Right ventricle myocardium inferior (tissue), 1 donor: ENCODE measurements at regions of chr4 and their contacts with region 1.

Region 1: DNA sequence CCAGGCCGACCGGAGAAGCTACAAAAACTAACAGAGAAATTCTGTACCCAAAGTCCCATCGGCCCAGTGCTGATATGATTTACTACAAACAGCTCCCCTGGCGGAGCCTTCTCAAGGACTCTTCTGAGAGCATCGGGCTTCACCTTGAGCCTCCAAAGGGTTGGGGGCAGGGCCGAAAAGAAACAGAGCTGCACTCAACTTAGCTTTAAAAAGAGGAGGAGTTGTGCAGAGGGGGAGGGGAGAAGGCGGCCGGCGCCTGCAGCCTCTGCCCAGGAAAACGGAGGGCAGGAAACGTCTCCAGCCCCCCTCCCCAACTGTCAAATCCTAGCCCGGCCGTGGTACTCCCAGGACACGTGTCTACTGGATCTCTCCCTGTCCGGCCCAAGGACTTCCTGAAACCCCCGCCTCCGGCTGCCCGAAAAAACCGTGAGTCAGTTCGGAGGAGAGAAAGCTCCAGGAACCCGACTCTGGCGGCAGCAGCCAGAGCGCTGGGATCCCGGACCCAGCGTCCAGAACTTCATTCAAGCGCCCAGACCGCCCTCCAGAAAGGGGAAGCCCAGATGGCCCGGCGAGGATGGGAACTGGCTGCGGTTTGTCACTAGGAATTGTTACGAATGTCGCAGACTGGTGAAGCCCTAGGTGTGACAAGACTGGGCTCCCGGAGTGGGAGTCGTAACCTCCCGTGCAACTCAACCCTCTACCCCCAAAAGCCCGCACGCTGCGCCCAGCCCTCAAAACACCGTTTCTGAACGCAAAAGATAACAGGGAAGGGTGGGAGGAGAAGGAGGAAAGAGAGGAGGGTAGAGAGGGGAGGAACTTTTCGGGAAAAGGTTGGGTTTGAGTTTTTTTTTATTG is 973 bp downstream of the ADAMTS3 start:
- DNase-seq: peak; percentile 70
- ATAC-seq: peak; percentile 70

Region 2: GRCh38 chr4:72286185-72286584 is 281.9 kb before region 1 on chr4:
- intact Hi-C with region 1: no loop called
- DNase-seq: no peak
- ATAC-seq: no peak

Region 3: GRCh38 chr4:72525938-72526337 is 42.1 kb before region 1 on chr4:
- intact Hi-C with region 1: loop called (anchors 2 kb)
- DNase-seq: peak; percentile 77
- ATAC-seq: peak; percentile 99

Region 4: GRCh38 chr4:72553540-72554337 is 14.3 kb before region 1 on chr4:
- intact Hi-C with region 1: loop called (anchors 1 kb)
- DNase-seq: no peak
- ATAC-seq: no peak